ENCODE measurements at regions of chr19 and their contacts with region 1.

Region 1: DNA sequence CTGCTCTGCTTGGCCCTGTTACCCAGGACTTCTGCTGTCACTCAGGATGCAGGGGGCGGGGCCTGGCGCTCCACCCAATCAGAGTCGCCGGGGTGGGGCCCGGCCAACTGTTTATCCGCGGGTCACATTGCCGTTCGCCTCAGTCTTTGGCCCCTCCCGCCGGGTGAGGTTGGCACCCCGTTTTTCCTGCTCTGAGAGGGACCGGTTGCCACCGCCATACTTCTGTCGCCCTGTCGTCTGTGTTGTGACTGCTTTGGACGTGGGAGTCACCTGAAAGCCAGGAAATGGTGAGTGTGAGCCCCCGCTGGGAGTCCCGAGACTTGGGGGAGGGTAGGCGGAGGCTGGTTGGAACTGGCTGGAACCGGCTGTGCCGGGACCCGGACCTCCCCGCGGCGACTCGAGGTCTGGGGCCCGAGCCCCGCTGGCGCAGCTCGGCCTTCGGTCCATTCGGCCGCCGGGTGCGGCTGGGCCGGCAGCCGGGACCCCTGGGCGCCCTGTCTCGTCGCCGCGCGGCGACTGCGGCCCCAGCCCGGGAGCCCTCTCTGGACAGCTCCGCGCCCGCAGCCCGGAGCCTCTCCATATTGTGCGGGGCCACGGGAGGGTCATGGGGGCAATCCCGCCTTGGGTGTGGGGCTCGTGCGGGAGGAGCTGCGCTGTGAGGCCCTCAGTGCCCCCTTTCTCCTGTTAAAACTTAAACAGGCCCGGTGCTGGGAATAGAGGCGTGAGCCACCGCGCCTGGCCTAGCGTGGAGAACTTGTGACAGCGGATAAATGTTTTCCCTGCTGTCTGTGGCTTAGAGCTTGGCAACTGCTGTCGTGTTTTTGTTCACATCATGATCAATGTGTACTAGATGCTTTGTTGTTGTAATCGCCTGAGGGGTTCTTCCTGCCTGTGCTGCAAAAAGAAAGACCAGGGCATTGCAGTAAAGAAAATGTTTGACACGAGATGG is at the start of gene ZNF844:
- DNase-seq: peak; percentile 62
- H3K4me3 ChIP-seq: peak within 1 kb of the TSS; percentile 66
- H3K27me3 ChIP-seq: no peaks in the 10 kb centered on the region
- CTCF ChIP-seq: no peak
- polyA plus RNA-seq, gene ZNF844: 2.8 and 4.5 TPM in 2 replicates

Region 2: GRCh38 chr19:12092065-12092867 is 27.4 kb after region 1 on chr19:
- CTCF ChIA-PET with region 1: interaction called, 14 read pairs
- POLR2A ChIA-PET with region 1: no interaction called
- DNase-seq: peak; percentile 47
- H3K4me3 ChIP-seq: peak overlapping the region; percentile 64
- H3K27me3 ChIP-seq: no peaks in the 10 kb centered on the region
- CTCF ChIP-seq: no peak

Region 3: GRCh38 chr19:12551060-12551832 is 486.4 kb after region 1 on chr19 and contains the start of gene ZNF564:
- CTCF ChIA-PET with region 1: no interaction called
- POLR2A ChIA-PET with region 1: interaction called, 15 read pairs
- DNase-seq: peak; percentile 94
- H3K4me3 ChIP-seq: peak within 1 kb of the TSS; percentile 90
- H3K27me3 ChIP-seq: no peaks in the 10 kb centered on the region
- CTCF ChIP-seq: no peak
- polyA plus RNA-seq, gene ZNF564: 1.4 and 2.9 TPM in 2 replicates

Measured in BJ (cell line).